Activated CD4-positive, alpha-beta memory T cell treated with anti-CD3 and anti-CD28 coated beads, Interleukin-2, amount 10 ng/mL, durations not matched to agents 7 days and 5 days (primary cell): ENCODE measurements at regions of chr5 and their contacts with region 1.

Region 1: DNA sequence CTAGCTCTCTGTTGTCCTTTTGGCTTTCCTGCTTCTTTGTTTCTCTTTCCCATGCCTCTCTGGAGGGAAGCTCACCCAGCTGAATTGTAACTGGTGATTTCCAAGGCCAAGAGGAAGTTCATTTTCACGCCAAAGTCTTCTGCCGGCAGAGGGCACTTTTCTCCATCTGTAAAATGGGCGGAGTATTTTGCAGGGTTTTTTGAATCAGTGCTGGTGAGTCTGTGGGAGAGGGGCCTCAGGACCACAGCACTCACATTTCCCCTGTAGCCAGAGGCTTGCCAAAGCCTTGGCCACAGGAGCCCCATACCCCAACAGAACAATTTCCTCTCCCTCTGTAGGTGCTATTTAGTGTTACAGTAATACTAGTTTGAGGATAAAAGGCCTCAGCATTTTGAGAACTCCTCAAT is 42.3 kb upstream of the MATR3 start:
- DNase-seq: peak; percentile 60
- H3K4me3 Mint-ChIP-seq: no peak overlapping the region
- H3K27ac Mint-ChIP-seq: peak overlapping the region; percentile 11
- H3K4me1 Mint-ChIP-seq: peaks cover 21% of the 10 kb centered on the region
- H3K27me3 Mint-ChIP-seq: no peaks in the 10 kb centered on the region

Region 2: GRCh38 chr5:139262742-139263445 is 11.6 kb after region 1 on chr5:
- CTCF ChIA-PET with region 1: interaction called, 15 read pairs
- POLR2A ChIA-PET with region 1: interaction called, 5 read pairs
- DNase-seq: peak; percentile 72
- H3K4me3 Mint-ChIP-seq: no peak overlapping the region
- H3K27ac Mint-ChIP-seq: no peak overlapping the region
- H3K4me1 Mint-ChIP-seq: peaks cover 7% of the 10 kb centered on the region
- H3K27me3 Mint-ChIP-seq: peaks cover 21% of the 10 kb centered on the region

Region 3: DNA sequence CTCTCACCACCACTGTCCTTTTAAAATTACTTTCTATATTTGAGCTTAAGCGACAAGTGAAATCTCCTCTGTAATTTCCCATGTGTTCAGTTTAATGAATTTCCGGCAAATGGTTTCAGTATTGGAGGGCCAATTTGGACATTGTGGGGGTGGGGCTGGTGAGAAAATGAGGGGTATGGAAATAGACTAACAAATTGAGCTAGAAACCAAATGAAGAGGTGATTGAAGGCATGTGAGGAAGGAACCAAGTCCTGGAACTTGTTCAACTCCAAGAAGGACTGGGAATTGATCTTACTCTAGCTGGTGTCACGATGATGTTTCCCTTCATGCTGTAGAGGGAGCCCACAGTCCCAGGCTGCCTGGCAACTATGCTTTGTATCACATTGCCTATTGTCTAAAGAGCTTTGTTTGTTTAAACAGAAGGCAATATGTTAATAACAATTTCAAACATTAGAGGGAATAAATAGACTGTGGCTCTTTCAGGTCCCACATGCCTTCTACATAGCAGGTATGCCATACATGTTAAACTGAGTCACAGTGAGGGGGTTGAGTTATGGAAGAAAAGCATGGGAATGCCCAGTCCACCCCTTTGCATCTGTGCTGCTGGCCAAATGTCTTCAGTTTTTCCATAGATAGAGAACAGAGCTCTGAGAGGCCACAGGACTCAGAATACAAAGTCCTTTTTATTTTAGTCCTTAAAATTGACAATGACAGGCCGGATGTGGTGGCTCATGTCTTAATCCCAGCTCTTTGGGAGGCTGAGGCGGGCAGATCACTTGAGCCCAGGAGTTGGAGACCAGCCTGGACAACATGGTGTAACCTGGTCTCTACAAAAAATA is 17.3 kb after region 1 on chr5:
- CTCF ChIA-PET with region 1: interaction called, 12 read pairs
- POLR2A ChIA-PET with region 1: interaction called, 4 read pairs
- DNase-seq: no peak
- H3K4me3 Mint-ChIP-seq: no peak overlapping the region
- H3K27ac Mint-ChIP-seq: no peak overlapping the region
- H3K4me1 Mint-ChIP-seq: peaks cover 22% of the 10 kb centered on the region
- H3K27me3 Mint-ChIP-seq: peaks cover 6% of the 10 kb centered on the region

Region 4: GRCh38 chr5:139273572-139274289 is 22.4 kb after region 1 on chr5:
- CTCF ChIA-PET with region 1: interaction called, 12 read pairs
- POLR2A ChIA-PET with region 1: interaction called, 4 read pairs
- DNase-seq: peak; percentile 91
- H3K4me3 Mint-ChIP-seq: peak overlapping the region; percentile 85
- H3K27ac Mint-ChIP-seq: peak overlapping the region; percentile 81
- H3K4me1 Mint-ChIP-seq: peaks cover 60% of the 10 kb centered on the region
- H3K27me3 Mint-ChIP-seq: peaks cover 4% of the 10 kb centered on the region

Region 5: DNA sequence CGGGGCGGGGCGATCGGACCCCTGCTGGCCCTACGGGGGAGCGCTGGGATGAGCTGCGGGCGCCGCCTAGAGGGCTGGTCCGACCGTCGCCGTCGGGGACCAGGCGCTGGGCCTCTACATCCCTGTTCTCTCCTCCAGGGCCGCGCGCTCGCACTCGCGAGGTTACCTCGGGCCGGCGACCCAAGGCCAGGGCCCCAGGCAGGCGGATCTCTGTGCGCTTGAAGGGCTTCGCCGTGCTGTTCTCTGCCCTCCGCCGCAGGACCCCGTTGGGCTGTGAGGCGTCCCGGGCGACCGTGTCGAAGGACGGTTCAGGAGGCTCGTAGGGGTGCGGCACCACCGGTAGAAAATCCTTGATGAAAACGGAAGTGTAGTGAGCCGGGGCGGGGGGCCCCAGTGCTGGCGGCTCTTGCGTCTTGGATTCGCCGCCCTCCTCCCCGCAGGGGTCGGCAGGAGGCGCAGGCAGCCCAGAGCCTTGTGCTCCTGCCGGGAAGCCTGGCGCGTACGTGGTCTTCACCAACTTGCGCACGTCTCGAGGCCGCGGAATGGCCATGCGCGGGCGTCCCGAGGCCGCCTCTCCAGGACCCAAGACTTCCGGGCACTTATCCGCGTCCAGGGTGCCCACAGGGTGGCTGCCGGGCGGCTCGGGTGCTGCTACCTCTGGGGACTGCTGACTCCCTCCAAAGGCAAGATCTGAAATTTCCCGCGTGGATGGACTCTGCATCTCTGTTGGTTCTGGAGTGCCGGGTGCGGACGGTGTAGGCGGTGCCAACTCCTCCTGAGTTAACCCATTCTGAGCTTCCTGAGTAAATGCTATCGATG is 141.6 kb after region 1 on chr5:
- CTCF ChIA-PET with region 1: interaction called, 17 read pairs
- POLR2A ChIA-PET with region 1: no interaction called
- DNase-seq: peak; percentile 92
- H3K4me3 Mint-ChIP-seq: peak overlapping the region; percentile 99
- H3K27ac Mint-ChIP-seq: peak overlapping the region; percentile 90
- H3K4me1 Mint-ChIP-seq: peaks cover 65% of the 10 kb centered on the region
- H3K27me3 Mint-ChIP-seq: no peaks in the 10 kb centered on the region

Region 6: GRCh38 chr5:139468421-139468931 is 217.2 kb after region 1 on chr5:
- CTCF ChIA-PET with region 1: no interaction called
- POLR2A ChIA-PET with region 1: no interaction called
- DNase-seq: peak; percentile 45
- H3K4me3 Mint-ChIP-seq: no peak overlapping the region
- H3K27ac Mint-ChIP-seq: peak overlapping the region; percentile 70
- H3K4me1 Mint-ChIP-seq: peaks cover 53% of the 10 kb centered on the region
- H3K27me3 Mint-ChIP-seq: no peaks in the 10 kb centered on the region